ENCODE measurements at regions of chr6 and their contacts with region 1.

Region 1: GRCh38 chr6:90216072-90216977 is 80.3 kb downstream of the BACH2 start:
- H3K4me3 ChIP-seq: no peak overlapping the region
- H3K27ac ChIP-seq: peak overlapping the region; percentile 48; the same call in 1 of the 2 replicates
- H3K4me1 ChIP-seq: peaks cover 51% of the 10 kb centered on the region
- CTCF ChIP-seq: 0 out of 2 replicates have a peak, but pooled peaks have one; percentile 16

Region 2: DNA sequence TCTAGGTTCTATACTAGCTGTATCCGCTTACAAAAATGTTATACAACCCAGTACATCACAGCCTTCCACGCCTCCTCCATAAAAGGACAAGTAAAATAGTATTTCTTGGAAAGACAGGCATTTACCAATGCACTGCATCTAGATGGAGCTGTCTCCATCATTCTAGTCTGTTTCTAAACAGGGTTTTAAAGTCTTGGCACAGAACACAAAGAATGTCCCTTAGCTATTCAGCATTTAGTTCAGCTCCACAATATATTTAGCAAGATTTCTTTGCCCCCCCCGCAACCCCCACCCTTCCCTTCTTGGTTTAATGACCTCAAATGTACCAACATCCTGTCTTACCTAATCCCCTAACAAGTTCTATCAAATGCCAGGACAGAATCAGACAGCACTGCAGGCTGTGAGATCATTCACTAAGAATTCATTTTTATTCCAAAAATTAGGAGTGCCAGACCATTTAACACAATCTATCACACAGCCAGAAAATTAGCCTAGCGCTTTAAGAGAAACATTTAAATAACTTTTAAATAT is 118.3 kb before region 1 on chr6:
- CTCF ChIA-PET with region 1: interaction called, 4 read pairs
- POLR2A ChIA-PET with region 1: interaction called, 17 read pairs
- H3K4me3 ChIP-seq: no peak overlapping the region
- H3K27ac ChIP-seq: no peak overlapping the region
- H3K4me1 ChIP-seq: no peaks in the 10 kb centered on the region; the same call in 1 of the 2 replicates
- CTCF ChIP-seq: peak; percentile 38; the same call in 1 of the 2 replicates

Region 3: GRCh38 chr6:90184334-90185298 is 31.7 kb before region 1 on chr6:
- CTCF ChIA-PET with region 1: interaction called, 3 read pairs
- POLR2A ChIA-PET with region 1: interaction called, 28 read pairs
- H3K4me3 ChIP-seq: no peak overlapping the region
- H3K27ac ChIP-seq: no peak overlapping the region; the same call in 1 of the 2 replicates
- H3K4me1 ChIP-seq: peaks cover 29% of the 10 kb centered on the region
- CTCF ChIP-seq: no peak

Region 4: GRCh38 chr6:90296346-90297114 is 80.2 kb after region 1 on chr6 and contains the start of gene BACH2:
- CTCF ChIA-PET with region 1: interaction called, 3 read pairs
- POLR2A ChIA-PET with region 1: interaction called, 13 read pairs
- H3K4me3 ChIP-seq: peak within 1 kb of the TSS; percentile 82
- H3K27ac ChIP-seq: peak within 1 kb of the TSS; percentile 70; the same call in 1 of the 2 replicates
- H3K4me1 ChIP-seq: no peaks in the 10 kb centered on the region; the same call in 1 of the 2 replicates
- CTCF ChIP-seq: no peak